ENCODE measurements at regions of chr1 and their contacts with region 1.

Region 1: DNA sequence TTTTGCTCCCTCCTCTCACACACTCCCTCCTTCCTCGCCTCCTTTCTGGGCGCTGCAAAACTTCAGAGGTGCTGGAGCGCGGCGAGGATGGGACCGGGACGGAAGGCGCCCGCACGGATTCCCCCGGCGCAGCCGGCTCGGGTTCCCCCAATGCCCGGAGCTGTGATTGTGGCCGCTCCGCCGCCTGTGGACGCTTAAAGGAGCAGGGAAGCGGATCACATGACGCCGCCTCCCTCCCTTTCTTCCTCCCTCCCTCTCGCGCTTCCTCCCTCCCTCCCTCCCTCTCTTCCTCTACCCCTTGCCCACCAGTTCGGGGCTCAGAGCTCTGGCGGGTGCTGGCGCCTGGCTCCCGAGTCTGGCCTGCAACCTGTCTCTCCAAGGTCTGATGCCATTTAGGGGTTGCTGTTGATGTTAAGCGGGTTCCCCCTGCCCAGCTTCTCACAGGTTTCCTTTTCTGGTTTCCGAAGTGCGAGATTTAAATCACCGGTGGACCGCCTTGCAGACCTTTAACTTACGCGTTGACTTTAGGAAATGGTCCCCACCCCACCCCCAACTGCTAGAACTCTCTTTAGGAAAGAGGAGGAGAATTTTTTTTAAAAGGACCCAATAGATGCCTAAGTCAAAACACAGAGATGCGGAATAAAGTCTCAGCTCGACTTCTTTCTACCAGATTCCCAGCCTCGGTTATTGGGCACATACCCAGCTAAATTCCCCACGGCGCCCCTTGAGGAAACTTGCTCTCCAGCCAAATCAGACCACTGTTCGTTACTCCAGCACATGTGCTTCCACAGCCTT is at the start of gene WLS:
- DNase-seq: peak; percentile 80
- H3K4me3 ChIP-seq: peak within 1 kb of the TSS; percentile 67 to 100 (median 93)
- H3K27ac ChIP-seq: peak within 1 kb of the TSS; percentile 85
- H3K4me1 ChIP-seq: peaks cover 29% of the 10 kb centered on the region
- H3K27me3 ChIP-seq: no peaks in the 10 kb centered on the region
- CTCF ChIP-seq: peak; percentile 5 to 16
- POLR2A ChIP-seq: peak; percentile 98
- total RNA-seq, gene WLS: 163 and 199 TPM in 2 replicates

Region 2: DNA sequence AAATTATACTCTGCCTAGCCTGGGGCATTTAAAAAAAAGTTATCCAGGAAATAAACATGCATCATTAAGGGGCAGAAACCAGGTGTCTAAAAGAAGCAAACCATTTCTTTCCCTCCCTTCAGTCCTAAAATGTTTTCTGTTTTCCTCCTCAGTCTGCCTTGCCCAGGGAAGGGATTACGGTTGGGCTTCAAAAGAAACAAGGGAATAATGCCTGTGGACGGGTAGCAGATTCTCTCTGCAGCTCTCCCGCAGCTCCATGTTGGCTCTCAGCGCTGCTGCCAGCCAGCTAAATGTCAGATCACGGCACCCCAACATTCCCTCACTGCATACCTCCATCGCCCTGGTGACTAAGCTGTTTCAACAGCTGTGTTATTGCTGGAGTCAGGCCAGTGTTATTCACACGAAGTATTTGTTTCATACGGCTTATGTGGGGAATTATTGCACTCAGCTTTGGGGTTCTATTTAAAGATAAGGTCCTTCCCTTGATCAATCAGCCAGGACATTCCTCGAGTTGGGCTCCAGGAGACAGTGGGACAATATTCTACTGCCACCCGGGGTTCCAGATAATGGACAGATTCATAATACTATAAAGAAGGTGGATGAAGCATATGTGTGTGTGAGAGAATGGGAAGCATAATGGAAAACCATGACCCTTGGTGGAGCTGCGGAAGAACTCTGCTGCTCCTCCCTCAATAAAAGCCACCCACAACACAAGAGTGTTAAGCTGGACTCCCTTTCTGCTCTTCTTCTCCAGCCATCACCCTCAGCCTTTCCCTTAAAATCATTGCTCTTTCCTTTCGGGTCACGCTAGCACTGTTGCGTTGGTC is 58.4 kb before region 1 on chr1:
- CTCF ChIA-PET with region 1: interaction called, 38 read pairs
- POLR2A ChIA-PET with region 1: interaction called, 83 read pairs
- dilution Hi-C with region 1: no loop called
- intact Hi-C with region 1: loop called (anchors 1 kb)
- DNase-seq: peak; percentile 98
- H3K4me3 ChIP-seq: peak overlapping the region in 1 of 3 experiments; percentile 41
- H3K27ac ChIP-seq: peak overlapping the region; percentile 93
- H3K4me1 ChIP-seq: peaks cover 66% of the 10 kb centered on the region
- H3K27me3 ChIP-seq: no peaks in the 10 kb centered on the region
- CTCF ChIP-seq: no peak
- POLR2A ChIP-seq: peak; percentile 60

Region 3: GRCh38 chr1:68213843-68214242 is 18.7 kb before region 1 on chr1:
- CTCF ChIA-PET with region 1: interaction called, 3 read pairs
- POLR2A ChIA-PET with region 1: interaction called, 10 read pairs
- dilution Hi-C with region 1: no loop called
- intact Hi-C with region 1: no loop called
- DNase-seq: peak; percentile 64
- H3K4me3 ChIP-seq: no peak overlapping the region
- H3K27ac ChIP-seq: no peak overlapping the region
- H3K4me1 ChIP-seq: peaks cover 20% of the 10 kb centered on the region
- H3K27me3 ChIP-seq: no peaks in the 10 kb centered on the region
- CTCF ChIP-seq: no peak
- POLR2A ChIP-seq: no peak

Region 4: DNA sequence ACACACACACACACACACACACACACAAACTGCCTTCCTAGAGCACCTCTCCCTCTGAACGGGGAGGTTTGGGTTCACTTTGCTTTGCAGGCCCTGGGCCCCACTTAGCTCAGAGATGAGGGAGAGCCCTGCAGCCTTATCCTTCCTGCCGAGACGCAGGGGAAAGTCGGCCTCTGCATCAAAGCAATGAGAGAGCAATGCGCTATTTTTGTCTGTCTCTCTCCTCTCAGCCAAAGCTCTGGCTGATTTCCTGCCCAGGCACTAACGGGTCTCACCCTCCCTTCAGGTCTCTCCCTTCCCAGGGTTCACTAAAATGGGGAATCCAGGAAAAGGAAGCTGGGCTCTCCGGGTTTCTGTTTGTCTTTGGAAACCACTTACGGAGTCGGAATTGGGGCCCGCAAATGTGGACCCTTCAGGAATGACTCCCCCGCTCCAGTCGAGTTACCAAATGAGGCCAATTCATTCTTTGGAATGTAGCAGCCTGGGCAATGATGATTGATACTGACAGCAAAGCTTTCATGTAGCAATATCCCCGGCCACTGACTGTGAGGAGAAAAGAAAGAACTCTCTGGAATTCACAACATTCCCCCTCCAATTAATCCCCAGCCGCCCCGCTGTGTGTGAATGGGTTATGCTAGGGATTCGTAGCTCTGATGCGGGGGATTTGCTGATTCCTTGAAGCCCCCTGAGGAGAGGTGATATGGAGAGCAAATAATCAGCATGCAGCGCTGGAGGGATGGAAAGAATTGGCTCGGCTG is 61.2 kb after region 1 on chr1:
- CTCF ChIA-PET with region 1: no interaction called
- POLR2A ChIA-PET with region 1: no interaction called
- dilution Hi-C with region 1: no loop called
- intact Hi-C with region 1: no loop called
- DNase-seq: peak; percentile 41
- H3K4me3 ChIP-seq: no peak overlapping the region
- H3K27ac ChIP-seq: no peak overlapping the region
- H3K4me1 ChIP-seq: peaks cover 7% of the 10 kb centered on the region
- H3K27me3 ChIP-seq: no peaks in the 10 kb centered on the region
- CTCF ChIP-seq: no peak
- POLR2A ChIP-seq: no peak

Region 5: DNA sequence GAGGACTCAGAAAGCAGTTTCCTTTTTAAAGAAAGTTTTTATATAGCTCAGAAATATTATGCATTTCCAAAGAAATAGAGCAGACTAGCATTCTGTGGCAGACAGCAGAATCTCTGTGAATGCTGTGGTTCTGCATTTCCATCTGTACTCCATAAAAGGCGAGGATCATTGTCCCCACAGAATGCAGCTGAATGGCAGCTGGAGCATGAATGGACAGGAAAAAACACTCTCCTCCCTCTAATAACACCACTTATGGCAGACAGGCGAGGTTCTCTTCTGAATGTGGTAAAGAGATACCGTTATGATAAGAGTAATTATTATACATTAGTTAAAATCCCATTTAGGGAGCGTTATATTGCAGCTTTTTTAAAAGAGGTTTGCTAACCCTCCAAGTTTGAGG is 81.2 kb after region 1 on chr1:
- CTCF ChIA-PET with region 1: no interaction called
- POLR2A ChIA-PET with region 1: interaction called, 4 read pairs
- dilution Hi-C with region 1: no loop called
- intact Hi-C with region 1: loop called (anchors 1 kb)
- DNase-seq: peak; percentile 53
- H3K4me3 ChIP-seq: no peak overlapping the region
- H3K27ac ChIP-seq: no peak overlapping the region
- H3K4me1 ChIP-seq: peaks cover 15% of the 10 kb centered on the region
- H3K27me3 ChIP-seq: no peaks in the 10 kb centered on the region
- CTCF ChIP-seq: no peak
- POLR2A ChIP-seq: no peak

Region 6: GRCh38 chr1:68331117-68331865 is 98.7 kb after region 1 on chr1:
- CTCF ChIA-PET with region 1: interaction called, 10 read pairs
- POLR2A ChIA-PET with region 1: interaction called, 7 read pairs
- dilution Hi-C with region 1: no loop called
- intact Hi-C with region 1: loop called (anchors 1 kb)
- DNase-seq: peak; percentile 87
- H3K4me3 ChIP-seq: no peak overlapping the region
- H3K27ac ChIP-seq: peak overlapping the region; percentile 30
- H3K4me1 ChIP-seq: peaks cover 29% of the 10 kb centered on the region
- H3K27me3 ChIP-seq: no peaks in the 10 kb centered on the region
- CTCF ChIP-seq: no peak
- POLR2A ChIP-seq: peak; percentile 26

Region 7: DNA sequence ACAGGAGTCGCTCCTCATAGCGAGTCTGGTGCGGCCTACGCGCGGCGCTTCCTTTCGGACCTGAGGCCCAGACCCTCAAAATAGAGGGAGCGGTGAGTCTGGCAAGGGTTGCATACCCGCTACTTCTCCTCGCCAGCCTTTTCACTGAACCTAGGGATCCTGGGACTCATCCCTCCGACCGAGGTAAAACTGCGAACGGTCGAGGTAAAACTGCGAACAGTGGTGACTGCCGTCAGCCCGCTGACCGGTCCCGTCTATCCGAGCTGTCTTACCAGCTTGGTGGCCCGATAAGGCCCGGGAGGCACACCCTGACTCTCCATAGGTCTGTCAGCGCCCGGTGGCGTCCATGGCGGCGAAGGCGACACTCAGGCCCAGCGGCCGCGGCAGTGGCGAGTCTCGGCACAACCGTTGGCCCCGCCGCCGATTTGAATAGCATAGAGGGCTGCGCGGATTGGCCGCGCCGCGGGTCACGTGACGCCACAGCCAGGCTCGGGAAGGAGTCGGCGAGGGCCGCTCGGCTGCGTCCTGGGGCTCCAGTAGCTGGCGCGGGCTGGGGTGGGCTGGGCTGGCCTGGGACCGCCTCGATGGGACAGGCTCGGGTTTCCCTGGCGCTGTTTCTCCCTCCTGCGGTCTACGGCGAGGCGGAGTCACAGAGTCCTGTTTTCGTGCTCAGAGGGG is 264.3 kb after region 1 on chr1 and contains the start of gene DEPDC1:
- CTCF ChIA-PET with region 1: no interaction called
- POLR2A ChIA-PET with region 1: no interaction called
- dilution Hi-C with region 1: no loop called
- intact Hi-C with region 1: loop called (anchors 1 kb)
- DNase-seq: peak; percentile 95
- H3K4me3 ChIP-seq: peak within 1 kb of the TSS; percentile 60 to 100 (median 99)
- H3K27ac ChIP-seq: peak within 1 kb of the TSS; percentile 87
- H3K4me1 ChIP-seq: peaks cover 22% of the 10 kb centered on the region
- H3K27me3 ChIP-seq: no peaks in the 10 kb centered on the region
- CTCF ChIP-seq: no peak
- POLR2A ChIP-seq: peak; percentile 10
- total RNA-seq, gene DEPDC1: 26.0 and 30.4 TPM in 2 replicates

Region 8: DNA sequence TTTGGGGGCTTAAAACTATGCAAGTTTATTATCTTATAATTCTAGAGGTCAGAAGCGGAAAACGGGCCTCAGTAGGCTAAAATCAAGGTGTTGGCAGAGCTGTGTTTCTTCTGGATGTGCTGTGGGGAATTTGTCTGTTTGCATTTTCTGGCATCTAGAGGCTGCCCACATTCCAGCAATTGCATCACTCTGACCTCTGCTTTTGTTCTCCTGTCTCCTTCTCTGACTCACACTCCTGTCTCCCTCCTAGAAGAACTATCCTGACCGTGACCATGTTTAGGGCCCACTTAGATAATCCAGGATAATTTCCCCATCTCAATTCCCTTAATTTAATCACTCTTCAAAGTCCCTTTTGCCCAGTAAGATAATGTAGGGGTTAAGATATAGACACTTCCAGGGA is 391.7 kb after region 1 on chr1:
- CTCF ChIA-PET with region 1: no interaction called
- POLR2A ChIA-PET with region 1: no interaction called
- dilution Hi-C with region 1: no loop called
- intact Hi-C with region 1: no loop called
- DNase-seq: peak; percentile 52
- H3K4me3 ChIP-seq: no peak overlapping the region
- H3K27ac ChIP-seq: no peak overlapping the region
- H3K4me1 ChIP-seq: no peaks in the 10 kb centered on the region
- H3K27me3 ChIP-seq: no peaks in the 10 kb centered on the region
- CTCF ChIP-seq: no peak
- POLR2A ChIP-seq: no peak

Measured in endothelial cell of umbilical vein (primary cell).